ENCODE measurements at regions of chr12 and their contacts with region 1.

Region 1: DNA sequence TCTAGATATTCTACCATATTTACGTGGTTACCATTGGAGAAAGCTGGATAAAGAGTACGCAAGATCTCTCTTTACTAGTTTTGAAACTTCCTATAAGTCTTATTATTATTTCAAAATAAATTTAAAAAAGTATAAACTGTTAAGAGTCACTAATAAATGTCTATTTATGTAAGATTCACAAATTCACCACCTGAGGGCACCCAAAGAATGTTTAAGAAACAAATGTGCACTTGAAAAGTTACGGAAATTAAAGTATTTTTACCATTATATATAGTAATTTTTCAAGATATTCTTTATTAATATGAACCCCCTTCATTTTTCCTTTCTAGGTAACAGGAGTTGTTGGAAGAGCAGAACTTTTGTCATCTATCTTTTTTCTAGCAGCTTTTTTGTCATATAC is 11.9 kb downstream of the TMTC3 start:
- DNase-seq: no peak
- H3K4me3 ChIP-seq: no peak overlapping the region
- H3K27ac ChIP-seq: no peak overlapping the region
- H3K4me1 ChIP-seq: no peaks in the 10 kb centered on the region
- H3K27me3 ChIP-seq: no peaks in the 10 kb centered on the region
- CTCF ChIP-seq: peak; percentile 69

Region 2: DNA sequence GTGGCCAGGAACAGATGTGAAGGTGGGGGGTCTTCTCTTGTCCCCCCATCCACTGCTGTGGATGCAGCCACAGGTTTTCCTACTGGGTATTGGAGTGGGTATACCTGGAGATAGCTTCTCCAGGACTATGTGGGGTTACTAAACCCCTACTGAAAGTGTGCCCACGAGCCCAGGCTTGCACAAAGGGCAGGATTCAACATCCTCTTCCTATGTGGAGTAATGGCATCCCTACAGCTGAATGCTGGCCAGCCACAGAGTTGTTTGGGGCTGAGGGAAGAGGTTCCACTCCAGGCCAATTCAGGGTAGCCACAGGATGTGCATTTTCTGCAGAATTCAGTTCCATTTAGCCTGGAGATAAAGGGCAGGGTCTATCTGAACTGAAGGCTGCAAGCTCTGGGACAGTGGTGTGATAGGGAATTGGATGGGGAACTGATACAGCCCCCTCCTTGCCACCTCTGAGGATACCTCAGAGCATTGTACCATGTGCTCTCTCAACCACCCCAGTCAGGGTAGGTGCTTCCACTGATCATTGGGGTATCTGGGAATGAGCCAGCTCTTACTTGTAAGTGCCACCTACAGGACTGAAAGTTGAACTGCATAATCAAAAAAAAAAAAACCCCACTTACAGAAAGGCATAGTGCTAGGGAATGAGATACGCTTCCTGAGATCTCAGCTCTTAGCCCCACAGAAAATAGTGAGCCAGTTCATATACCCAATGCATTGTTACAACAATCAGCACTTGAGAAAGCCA is 239.2 kb after region 1 on chr12:
- CTCF ChIA-PET with region 1: no interaction called
- POLR2A ChIA-PET with region 1: interaction called, 23 read pairs
- intact Hi-C with region 1: no loop called
- DNase-seq: no peak
- H3K4me3 ChIP-seq: no peak overlapping the region
- H3K27ac ChIP-seq: no peak overlapping the region
- H3K4me1 ChIP-seq: no peaks in the 10 kb centered on the region
- H3K27me3 ChIP-seq: no peaks in the 10 kb centered on the region
- CTCF ChIP-seq: peak; percentile 61

Region 3: GRCh38 chr12:88623777-88624548 is 470.0 kb after region 1 on chr12:
- CTCF ChIA-PET with region 1: no interaction called
- POLR2A ChIA-PET with region 1: no interaction called
- intact Hi-C with region 1: no loop called
- DNase-seq: no peak
- H3K4me3 ChIP-seq: no peak overlapping the region
- H3K27ac ChIP-seq: no peak overlapping the region
- H3K4me1 ChIP-seq: no peaks in the 10 kb centered on the region
- H3K27me3 ChIP-seq: no peaks in the 10 kb centered on the region
- CTCF ChIP-seq: no peak